ENCODE measurements at regions of chr6 and their contacts with region 1.

Region 1: DNA sequence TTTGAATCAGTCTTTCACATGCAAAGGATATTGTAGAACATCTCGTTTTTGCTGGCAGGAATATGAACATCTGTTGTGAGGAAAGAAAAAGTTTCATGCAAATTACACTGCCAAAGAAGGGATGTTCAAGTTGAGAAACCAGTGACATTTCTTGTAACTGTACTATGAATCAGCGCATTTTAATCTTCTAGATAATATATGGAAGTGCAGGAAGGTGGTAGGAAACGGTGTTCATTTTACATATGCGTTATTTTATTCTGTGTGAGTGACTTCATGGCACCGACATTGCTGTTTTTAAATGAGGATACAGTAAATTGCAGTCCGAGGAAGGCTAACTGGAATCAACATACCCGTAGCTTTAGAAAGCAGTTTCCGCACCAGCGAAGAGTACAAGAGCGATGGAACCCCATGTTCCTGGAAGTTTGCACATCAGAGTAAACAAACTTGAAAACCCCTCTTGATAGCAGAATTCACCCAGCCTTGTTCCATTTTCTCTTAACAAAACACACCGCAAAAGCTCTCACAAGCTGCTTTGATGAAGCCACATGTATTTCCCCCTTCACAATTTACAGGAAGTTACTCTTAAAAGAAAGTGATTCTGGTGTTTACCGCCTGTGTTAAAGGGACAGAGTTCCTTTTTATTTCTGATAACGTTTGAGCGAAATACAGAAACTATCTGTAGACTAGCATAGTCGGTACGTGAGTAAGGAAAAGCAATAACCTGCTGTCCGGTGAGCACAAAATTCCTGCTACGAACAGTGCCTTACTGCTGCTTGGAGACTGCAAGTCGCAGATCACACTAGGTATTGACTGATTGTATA is 11.5 kb downstream of the PRDM1 start:
- DNase-seq: peak; percentile 67
- ATAC-seq: peak; percentile 30
- H3K4me3 Mint-ChIP-seq: peak overlapping the region; percentile 82
- H3K27ac Mint-ChIP-seq: peak overlapping the region; percentile 98
- H3K4me1 Mint-ChIP-seq: peaks cover 88% of the 10 kb centered on the region
- H3K27me3 Mint-ChIP-seq: peaks cover 7% of the 10 kb centered on the region

Region 2: GRCh38 chr6:105810105-105810921 is 287.3 kb before region 1 on chr6:
- CTCF ChIA-PET with region 1: no interaction called
- POLR2A ChIA-PET with region 1: no interaction called
- intact Hi-C with region 1: loop called in 1 of 2 experiments (anchors 5 kb)
- DNase-seq: peak; percentile 78
- ATAC-seq: peak; percentile 90
- H3K4me3 Mint-ChIP-seq: no peak overlapping the region
- H3K27ac Mint-ChIP-seq: no peak overlapping the region
- H3K4me1 Mint-ChIP-seq: peaks cover 37% of the 10 kb centered on the region
- H3K27me3 Mint-ChIP-seq: peaks cover 6% of the 10 kb centered on the region

Region 3: GRCh38 chr6:105992315-105992961 is 105.2 kb before region 1 on chr6:
- CTCF ChIA-PET with region 1: interaction called, 14 read pairs
- POLR2A ChIA-PET with region 1: no interaction called
- intact Hi-C with region 1: loop called in 1 of 2 experiments (anchors 1 kb)
- DNase-seq: peak; percentile 94
- ATAC-seq: peak; percentile 93
- H3K4me3 Mint-ChIP-seq: peak overlapping the region; percentile 88
- H3K27ac Mint-ChIP-seq: peak overlapping the region; percentile 91
- H3K4me1 Mint-ChIP-seq: peaks cover 32% of the 10 kb centered on the region
- H3K27me3 Mint-ChIP-seq: peaks cover 61% of the 10 kb centered on the region

Region 4: DNA sequence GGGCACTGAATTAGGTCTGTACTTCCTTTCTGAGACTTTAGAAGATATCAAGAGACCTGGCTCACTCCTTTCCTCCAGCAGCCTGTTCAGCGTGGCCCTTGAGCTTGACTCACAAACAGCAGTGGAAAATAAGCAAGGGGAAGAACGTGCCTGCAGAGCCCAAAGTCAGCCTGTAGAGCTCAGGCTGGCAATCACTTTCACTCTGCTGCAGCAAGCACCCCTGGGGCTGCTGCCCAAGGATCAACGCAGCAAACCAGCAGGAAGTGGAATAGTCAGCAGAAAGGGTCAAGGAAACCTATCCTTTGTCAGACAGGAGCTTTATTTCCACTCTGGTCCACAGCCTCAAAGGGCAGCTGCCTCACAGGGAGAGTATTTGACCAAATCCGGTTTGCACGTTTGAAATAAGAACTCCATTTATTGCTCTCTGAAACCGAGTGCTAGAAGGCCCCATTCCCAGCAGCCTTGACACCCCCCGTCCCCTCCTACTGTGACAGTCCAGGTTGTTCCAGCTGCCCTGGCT is 65.9 kb after region 1 on chr6:
- CTCF ChIA-PET with region 1: interaction called, 4 read pairs
- POLR2A ChIA-PET with region 1: interaction called, 12 read pairs
- intact Hi-C with region 1: loop called (anchors 1 kb)
- DNase-seq: peak; percentile 80
- ATAC-seq: peak; percentile 59
- H3K4me3 Mint-ChIP-seq: peak overlapping the region; percentile 61
- H3K27ac Mint-ChIP-seq: peak overlapping the region; percentile 89
- H3K4me1 Mint-ChIP-seq: peaks cover 49% of the 10 kb centered on the region
- H3K27me3 Mint-ChIP-seq: peaks cover 2% of the 10 kb centered on the region

Region 5: GRCh38 chr6:106300944-106301343 is 203.3 kb after region 1 on chr6:
- CTCF ChIA-PET with region 1: interaction called, 3 read pairs
- POLR2A ChIA-PET with region 1: no interaction called
- intact Hi-C with region 1: loop called in 1 of 2 experiments (anchors 5 kb)
- DNase-seq: no peak
- ATAC-seq: no peak
- H3K4me3 Mint-ChIP-seq: no peak overlapping the region
- H3K27ac Mint-ChIP-seq: no peak overlapping the region
- H3K4me1 Mint-ChIP-seq: peaks cover 7% of the 10 kb centered on the region
- H3K27me3 Mint-ChIP-seq: no peaks in the 10 kb centered on the region

Region 6: DNA sequence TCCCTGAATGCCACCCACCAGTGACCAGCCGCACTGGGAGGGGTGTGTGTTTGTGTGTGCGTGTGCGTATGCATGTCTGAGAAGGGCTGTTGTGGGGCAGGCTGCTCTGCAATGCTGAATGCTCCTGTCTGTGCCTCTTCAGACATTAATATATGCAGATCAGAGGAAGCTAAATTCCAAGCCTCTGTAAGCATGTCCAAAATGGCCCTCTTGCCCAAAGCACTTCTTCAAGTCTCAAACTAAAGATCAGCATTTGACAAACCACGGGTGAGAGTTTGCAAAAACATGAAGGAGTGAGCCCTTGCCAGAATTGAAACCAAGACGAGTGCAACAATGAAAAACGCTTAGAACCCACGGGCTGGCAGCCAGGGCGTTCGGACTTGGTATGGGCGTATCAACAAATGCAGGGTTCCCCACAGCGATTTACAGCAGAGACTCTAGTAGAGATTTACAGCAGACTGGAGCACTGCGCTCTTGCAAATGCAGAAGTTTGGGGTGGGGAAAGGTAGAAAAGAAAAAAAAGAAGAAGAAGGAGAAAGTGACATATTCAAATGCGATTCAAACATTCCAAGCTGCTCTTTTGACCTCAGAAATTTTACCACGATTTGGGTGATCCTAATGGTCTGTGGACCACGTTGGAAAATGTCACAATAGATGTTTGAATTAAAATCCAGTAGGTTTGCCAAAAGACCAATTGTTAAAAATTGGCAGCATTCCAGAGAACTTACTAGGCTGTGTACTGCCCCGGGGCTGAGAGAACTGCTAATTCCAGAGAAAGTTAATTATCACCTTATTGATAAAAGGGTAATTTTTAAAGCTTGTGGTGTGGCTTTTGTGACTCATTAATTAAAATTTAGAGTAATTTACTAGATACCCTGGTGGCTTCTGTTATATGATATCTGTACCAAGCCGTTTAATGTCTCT is 1723.0 kb after region 1 on chr6:
- CTCF ChIA-PET with region 1: no interaction called
- POLR2A ChIA-PET with region 1: no interaction called
- intact Hi-C with region 1: loop called in 1 of 2 experiments (anchors 5 kb)
- DNase-seq: peak; percentile 60
- ATAC-seq: no peak
- H3K4me3 Mint-ChIP-seq: peak overlapping the region; percentile 87
- H3K27ac Mint-ChIP-seq: peak overlapping the region; percentile 98
- H3K4me1 Mint-ChIP-seq: peaks cover 84% of the 10 kb centered on the region
- H3K27me3 Mint-ChIP-seq: no peaks in the 10 kb centered on the region

Measured in activated CD4-positive, alpha-beta T cell treated with anti-CD3 and anti-CD28 coated beads for 36 hours (primary cell).